PC-3 (cell line): ENCODE measurements at regions of chr16 and their contacts with region 1.

Region 1: GRCh38 chr16:85554112-85554813 is 58.9 kb upstream of the GSE1 start:
- DNase-seq: peak; percentile 74
- ATAC-seq: peak; percentile 48
- H3K4me3 ChIP-seq: peak overlapping the region; percentile 91
- H3K27ac ChIP-seq: peak overlapping the region; percentile 61
- H3K4me1 ChIP-seq: peaks cover 19% of the 10 kb centered on the region
- H3K27me3 ChIP-seq: no peaks in the 10 kb centered on the region
- CTCF ChIP-seq: no peak

Region 2: DNA sequence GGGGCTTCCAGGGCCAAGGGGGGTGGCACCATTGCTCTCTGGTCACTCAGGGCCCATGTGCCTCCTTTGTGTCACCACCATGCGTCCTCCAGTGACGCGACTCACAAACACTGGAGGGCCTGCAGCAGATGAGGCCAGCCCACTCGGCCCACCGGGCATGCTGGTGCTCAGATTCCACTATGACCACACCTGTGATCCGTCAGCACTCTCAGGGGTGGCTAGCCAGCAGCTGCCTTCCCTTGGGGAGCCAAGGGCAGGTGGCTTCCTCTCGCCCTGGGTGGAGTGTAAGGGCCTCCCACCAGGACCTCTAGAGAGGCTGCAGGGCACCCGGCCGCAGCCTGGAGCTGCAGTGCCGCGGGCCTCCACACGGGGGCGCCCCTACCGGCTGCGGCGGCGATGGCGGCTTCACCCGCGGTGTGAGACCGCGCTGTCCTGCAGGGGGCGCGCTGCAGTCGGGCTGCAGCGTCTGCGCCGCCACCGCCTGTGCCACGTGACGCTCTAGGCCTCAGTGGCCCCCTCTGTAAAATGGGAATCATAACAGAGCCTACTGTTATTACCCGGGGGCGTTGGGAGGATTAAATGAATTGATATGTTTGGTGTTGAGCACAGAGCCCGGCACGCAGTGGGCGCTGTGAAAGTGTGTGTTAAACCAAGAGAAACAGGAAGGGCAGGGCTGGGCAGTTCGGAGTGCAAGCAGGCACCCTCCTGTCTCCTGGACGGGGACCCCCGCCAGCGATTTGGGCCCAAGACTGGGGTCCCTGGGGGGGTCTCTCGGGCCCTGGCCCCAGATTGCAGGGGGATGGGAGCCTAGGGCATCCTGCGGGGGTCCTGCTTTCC is 133.5 kb before region 1 on chr16:
- CTCF ChIA-PET with region 1: interaction called, 7 read pairs
- POLR2A ChIA-PET with region 1: no interaction called
- intact Hi-C with region 1: loop called (anchors 10 kb)
- DNase-seq: peak; percentile 66
- ATAC-seq: peak; percentile 60
- H3K4me3 ChIP-seq: no peak overlapping the region
- H3K27ac ChIP-seq: no peak overlapping the region
- H3K4me1 ChIP-seq: no peaks in the 10 kb centered on the region
- H3K27me3 ChIP-seq: no peaks in the 10 kb centered on the region
- CTCF ChIP-seq: peak; percentile 97

Region 3: GRCh38 chr16:85541980-85542900 is 12.0 kb before region 1 on chr16:
- CTCF ChIA-PET with region 1: no interaction called
- POLR2A ChIA-PET with region 1: no interaction called
- intact Hi-C with region 1: no loop called
- DNase-seq: no peak
- ATAC-seq: no peak
- H3K4me3 ChIP-seq: no peak overlapping the region
- H3K27ac ChIP-seq: no peak overlapping the region
- H3K4me1 ChIP-seq: no peaks in the 10 kb centered on the region
- H3K27me3 ChIP-seq: no peaks in the 10 kb centered on the region
- CTCF ChIP-seq: no peak